ENCODE measurements at regions of chr10 and their contacts with region 1.

Region 1: GRCh38 chr10:103295374-103296015 is 18.6 kb downstream of the INA start:
- DNase-seq: no peak
- H3K4me3 ChIP-seq: no peak overlapping the region
- H3K27ac ChIP-seq: no peak overlapping the region
- H3K4me1 ChIP-seq: no peaks in the 10 kb centered on the region
- H3K27me3 ChIP-seq: no peaks in the 10 kb centered on the region
- CTCF ChIP-seq: no peak

Region 2: DNA sequence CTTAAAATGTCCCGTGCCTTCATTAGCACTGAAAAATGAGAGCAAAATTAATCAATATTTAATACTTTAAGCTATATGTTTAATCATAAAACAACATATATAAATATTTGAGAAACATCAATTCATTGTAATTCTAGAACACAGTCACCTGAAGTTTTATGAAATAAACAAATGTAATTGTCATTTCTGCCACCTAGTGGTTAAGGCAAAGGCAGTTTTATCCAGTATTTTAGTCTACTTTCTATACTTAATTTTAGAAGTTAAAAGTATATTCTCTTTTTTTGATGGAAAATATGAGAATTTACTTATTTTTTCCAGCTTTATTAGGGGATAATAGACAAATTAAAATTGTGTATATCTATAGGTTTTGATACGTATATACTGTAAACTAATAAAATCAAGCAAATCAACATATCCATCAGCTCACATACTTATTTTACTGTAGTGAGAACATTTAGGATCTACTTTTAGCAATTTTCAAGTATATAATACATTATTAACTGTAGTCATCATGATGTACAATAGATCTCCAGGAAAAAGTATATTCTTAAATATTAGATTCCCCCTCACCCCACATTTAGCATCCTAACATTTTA is 38.5 kb after region 1 on chr10:
- CTCF ChIA-PET with region 1: interaction called, 3 read pairs
- POLR2A ChIA-PET with region 1: interaction called, 19 read pairs
- intact Hi-C with region 1: no loop called
- DNase-seq: peak; percentile 39
- H3K4me3 ChIP-seq: no peak overlapping the region
- H3K27ac ChIP-seq: no peak overlapping the region
- H3K4me1 ChIP-seq: no peaks in the 10 kb centered on the region
- H3K27me3 ChIP-seq: no peaks in the 10 kb centered on the region
- CTCF ChIP-seq: peak; percentile 76